ENCODE measurements at regions of chr9 and their contacts with region 1.

Region 1: DNA sequence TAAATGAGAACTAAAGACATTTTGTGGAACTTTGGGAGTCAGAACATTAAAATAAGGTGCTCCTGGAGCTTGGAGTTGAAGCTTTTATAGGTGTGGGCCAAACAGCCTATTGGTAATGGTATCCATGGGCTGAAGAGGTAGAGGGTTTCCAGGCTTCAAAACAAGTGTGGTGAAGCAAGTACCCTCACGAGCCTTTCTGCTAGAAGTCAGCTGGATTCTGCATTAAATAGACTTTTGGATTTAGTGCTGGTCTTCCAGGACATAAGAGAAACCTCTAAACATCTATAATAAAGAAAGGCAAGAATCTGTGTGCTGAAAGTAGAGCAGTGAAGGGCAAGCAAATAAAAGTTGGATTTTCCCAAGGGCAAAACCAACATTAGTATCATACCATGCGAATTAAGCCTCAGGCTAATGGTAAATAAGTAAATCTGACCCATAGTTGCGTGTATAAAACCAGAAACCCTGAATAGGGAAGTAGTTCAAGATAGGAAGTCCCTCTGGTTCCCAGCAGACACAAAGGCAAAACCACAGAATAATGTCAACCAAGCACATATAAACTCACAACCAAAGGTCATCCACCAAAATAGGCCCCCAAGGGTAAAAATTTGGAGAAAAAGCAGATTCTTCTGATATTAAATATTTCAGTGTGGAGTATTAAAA is 306.3 kb downstream of the TLE4 start:
- DNase-seq: no peak
- ATAC-seq: peak; percentile 63
- H3K4me3 ChIP-seq: no peak overlapping the region
- H3K4me3 Mint-ChIP-seq: no peak overlapping the region
- H3K27ac ChIP-seq: no peak overlapping the region
- H3K27ac Mint-ChIP-seq: no peak overlapping the region
- H3K4me1 ChIP-seq: peaks cover 7 to 15% of the 10 kb centered on the region in 2 donors
- H3K4me1 Mint-ChIP-seq: peaks cover 18 to 48% (median 44%) of the 10 kb centered on the region in 7 donors
- H3K27me3 ChIP-seq: no peaks in the 10 kb centered on the region
- H3K27me3 Mint-ChIP-seq: peaks cover 0 to 2% (median 0%) of the 10 kb centered on the region in 5 donors

Region 2: DNA sequence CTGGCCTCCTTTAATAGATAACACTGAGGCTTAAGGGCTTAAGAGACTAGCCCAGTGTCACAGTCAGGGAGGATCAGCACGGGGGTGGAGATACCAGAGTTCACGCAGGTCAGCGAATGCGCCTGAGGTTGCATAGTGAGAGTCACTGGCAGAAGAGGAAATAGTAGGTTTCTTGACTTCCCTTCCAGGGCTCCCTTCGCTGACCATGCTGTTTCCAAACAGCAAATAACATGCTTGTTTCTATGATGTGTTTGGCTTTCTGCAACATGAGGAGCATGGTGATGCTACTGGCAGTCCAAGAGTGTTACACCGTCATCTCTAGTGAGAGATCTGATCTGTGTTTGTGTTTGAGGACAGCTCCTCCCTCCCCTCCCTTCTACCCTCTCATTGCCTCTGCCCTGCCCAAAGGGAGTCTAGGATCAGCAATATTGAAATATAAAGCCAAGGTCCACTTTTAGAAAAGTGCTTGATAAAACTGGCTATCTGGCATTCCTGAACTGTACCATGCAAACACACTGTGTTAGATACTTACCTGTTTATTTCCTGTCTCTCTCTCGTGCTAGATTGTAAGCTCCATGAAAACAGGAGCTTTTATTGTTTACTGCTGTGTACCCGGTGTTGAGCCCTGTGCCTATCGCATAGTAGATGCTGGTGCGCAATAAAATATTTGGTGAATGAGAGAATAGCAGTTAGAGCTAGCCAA is 294.0 kb before region 1 on chr9:
- CTCF ChIA-PET with region 1: no interaction called
- POLR2A ChIA-PET with region 1: no interaction called
- intact Hi-C with region 1: no loop called
- DNase-seq: no peak
- ATAC-seq: peak; percentile 84
- H3K4me3 ChIP-seq: peak overlapping the region; percentile 10
- H3K4me3 Mint-ChIP-seq: peak overlapping the region in 9 of 10 donors; percentile 39 to 76 (median 63)
- H3K27ac ChIP-seq: no peak overlapping the region
- H3K27ac Mint-ChIP-seq: peak overlapping the region in 6 of 9 donors; percentile 1 to 89 (median 26)
- H3K4me1 ChIP-seq: peaks cover 45 to 47% of the 10 kb centered on the region in 2 donors
- H3K4me1 Mint-ChIP-seq: peaks cover 50 to 93% (median 85%) of the 10 kb centered on the region in 7 donors
- H3K27me3 ChIP-seq: no peaks in the 10 kb centered on the region
- H3K27me3 Mint-ChIP-seq: peaks cover 0 to 2% (median 0%) of the 10 kb centered on the region in 5 donors

Region 3: DNA sequence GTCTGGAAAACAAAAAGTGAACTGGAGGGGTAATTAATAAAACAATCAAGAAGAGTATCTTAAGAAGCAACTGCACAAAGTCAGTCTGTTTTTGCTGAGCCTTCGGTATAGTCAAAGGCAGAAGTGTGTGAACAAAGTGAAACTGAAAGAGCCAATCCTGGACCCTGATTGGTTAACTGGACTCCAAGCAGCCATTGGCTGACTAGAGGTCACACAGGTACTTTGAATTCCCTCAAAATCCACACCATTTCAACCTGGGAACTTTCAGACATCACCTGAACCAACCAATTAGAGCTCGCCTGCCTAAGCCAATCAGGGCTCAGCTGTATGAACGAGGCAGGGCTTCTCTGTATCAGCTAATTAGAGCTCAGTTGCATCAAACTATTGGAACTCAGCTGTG is 19.6 kb before region 1 on chr9:
- CTCF ChIA-PET with region 1: no interaction called
- POLR2A ChIA-PET with region 1: no interaction called
- intact Hi-C with region 1: loop called in 1 of 2 experiments (anchors 2 kb)
- DNase-seq: peak in 4 of 9 donors; percentile 7 to 36 (median 18)
- ATAC-seq: peak; percentile 78
- H3K4me3 ChIP-seq: no peak overlapping the region
- H3K4me3 Mint-ChIP-seq: peak overlapping the region; percentile 10 to 77 (median 66)
- H3K27ac ChIP-seq: no peak overlapping the region
- H3K27ac Mint-ChIP-seq: peak overlapping the region in 7 of 9 donors; percentile 54 to 93 (median 75)
- H3K4me1 ChIP-seq: no peaks in the 10 kb centered on the region
- H3K4me1 Mint-ChIP-seq: peaks cover 2 to 17% (median 13%) of the 10 kb centered on the region in 7 donors
- H3K27me3 ChIP-seq: no peaks in the 10 kb centered on the region
- H3K27me3 Mint-ChIP-seq: no peaks in the 10 kb centered on the region

Region 4: DNA sequence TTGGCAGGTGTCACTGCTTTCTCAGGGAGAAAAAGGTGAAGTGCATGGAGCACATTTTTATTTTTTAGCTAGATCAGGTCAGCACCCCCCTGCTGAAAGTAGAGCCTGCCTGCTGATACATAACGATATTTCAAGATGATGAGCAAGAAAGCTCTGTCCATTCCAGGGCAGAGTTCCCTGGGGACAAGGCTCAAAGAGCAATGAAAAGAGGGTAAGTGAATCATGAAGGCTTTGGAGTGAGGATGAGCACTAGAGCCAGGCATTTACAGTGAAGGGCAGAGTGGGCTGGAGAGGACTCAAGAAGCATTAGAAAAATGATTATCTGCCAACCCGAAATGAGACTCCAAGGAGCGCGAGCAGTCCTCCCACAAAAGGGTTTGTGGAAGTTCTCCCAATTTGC is 39.3 kb after region 1 on chr9:
- CTCF ChIA-PET with region 1: no interaction called
- POLR2A ChIA-PET with region 1: no interaction called
- intact Hi-C with region 1: no loop called
- DNase-seq: no peak
- ATAC-seq: no peak
- H3K4me3 ChIP-seq: no peak overlapping the region
- H3K4me3 Mint-ChIP-seq: no peak overlapping the region
- H3K27ac ChIP-seq: no peak overlapping the region
- H3K27ac Mint-ChIP-seq: no peak overlapping the region
- H3K4me1 ChIP-seq: no peaks in the 10 kb centered on the region
- H3K4me1 Mint-ChIP-seq: peaks cover 0 to 1% (median 0%) of the 10 kb centered on the region in 7 donors
- H3K27me3 ChIP-seq: no peaks in the 10 kb centered on the region
- H3K27me3 Mint-ChIP-seq: no peaks in the 10 kb centered on the region

Region 5: DNA sequence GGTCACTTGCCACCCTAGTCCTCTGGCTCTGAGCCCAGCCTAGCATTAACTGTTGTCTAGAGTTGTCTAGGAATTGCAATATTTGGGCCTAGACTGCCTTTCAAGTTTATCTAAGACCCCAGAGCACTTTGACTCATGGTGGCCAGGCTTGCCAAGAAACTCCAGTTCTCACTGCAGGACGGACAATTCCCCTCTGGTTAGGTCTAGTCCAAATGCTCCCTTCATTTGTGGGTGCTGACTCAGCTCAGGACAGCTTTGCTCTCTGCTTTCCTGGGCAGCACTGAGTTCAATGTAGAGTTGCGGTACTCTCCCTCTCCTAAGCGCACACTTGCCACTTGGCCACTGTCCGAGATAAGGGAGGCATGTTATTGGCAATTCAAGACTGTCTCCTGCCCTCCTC is 1191.8 kb after region 1 on chr9:
- CTCF ChIA-PET with region 1: no interaction called
- POLR2A ChIA-PET with region 1: no interaction called
- intact Hi-C with region 1: no loop called
- DNase-seq: no peak
- ATAC-seq: no peak
- H3K4me3 ChIP-seq: no peak overlapping the region
- H3K4me3 Mint-ChIP-seq: no peak overlapping the region
- H3K27ac ChIP-seq: no peak overlapping the region
- H3K27ac Mint-ChIP-seq: no peak overlapping the region
- H3K4me1 ChIP-seq: no peaks in the 10 kb centered on the region
- H3K4me1 Mint-ChIP-seq: no peaks in the 10 kb centered on the region
- H3K27me3 ChIP-seq: no peaks in the 10 kb centered on the region
- H3K27me3 Mint-ChIP-seq: no peaks in the 10 kb centered on the region

Measured in naive thymus-derived CD4-positive, alpha-beta T cell (primary cell).